Activated CD4-positive, alpha-beta memory T cell treated with anti-CD3 and anti-CD28 coated beads, Interleukin-2, amount 10 ng/mL, durations not matched to agents 7 days and 5 days (primary cell): ENCODE measurements at regions of chr19 and their contacts with region 1.

Region 1: GRCh38 chr19:21463449-21464105 is 41.8 kb upstream of the ZNF429 start:
- DNase-seq: peak; percentile 39
- H3K4me3 Mint-ChIP-seq: peak overlapping the region; percentile 71
- H3K27ac Mint-ChIP-seq: peak overlapping the region; percentile 26
- H3K4me1 Mint-ChIP-seq: peaks cover 4% of the 10 kb centered on the region
- H3K27me3 Mint-ChIP-seq: no peaks in the 10 kb centered on the region

Region 2: DNA sequence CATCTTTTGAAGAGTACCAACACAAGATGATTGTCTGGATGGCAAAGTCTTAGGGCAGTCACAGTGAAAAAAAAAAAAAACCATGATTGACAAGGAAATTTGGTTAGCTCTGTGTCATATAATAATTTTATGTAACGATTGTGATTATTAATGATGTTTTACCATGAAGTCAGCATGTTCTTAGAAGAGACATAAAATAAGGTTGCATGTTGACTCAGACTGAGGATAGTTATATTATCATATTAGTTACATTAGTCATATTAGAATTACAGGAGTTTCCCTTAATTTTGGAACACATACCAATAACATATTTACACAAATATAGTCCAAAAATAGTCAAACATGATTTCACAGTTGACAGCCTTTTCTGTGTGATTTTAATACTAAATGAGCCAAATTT is 316.0 kb before region 1 on chr19:
- CTCF ChIA-PET with region 1: no interaction called
- POLR2A ChIA-PET with region 1: no interaction called
- DNase-seq: no peak
- H3K4me3 Mint-ChIP-seq: no peak overlapping the region
- H3K27ac Mint-ChIP-seq: no peak overlapping the region
- H3K4me1 Mint-ChIP-seq: peaks cover 16% of the 10 kb centered on the region
- H3K27me3 Mint-ChIP-seq: no peaks in the 10 kb centered on the region

Region 3: DNA sequence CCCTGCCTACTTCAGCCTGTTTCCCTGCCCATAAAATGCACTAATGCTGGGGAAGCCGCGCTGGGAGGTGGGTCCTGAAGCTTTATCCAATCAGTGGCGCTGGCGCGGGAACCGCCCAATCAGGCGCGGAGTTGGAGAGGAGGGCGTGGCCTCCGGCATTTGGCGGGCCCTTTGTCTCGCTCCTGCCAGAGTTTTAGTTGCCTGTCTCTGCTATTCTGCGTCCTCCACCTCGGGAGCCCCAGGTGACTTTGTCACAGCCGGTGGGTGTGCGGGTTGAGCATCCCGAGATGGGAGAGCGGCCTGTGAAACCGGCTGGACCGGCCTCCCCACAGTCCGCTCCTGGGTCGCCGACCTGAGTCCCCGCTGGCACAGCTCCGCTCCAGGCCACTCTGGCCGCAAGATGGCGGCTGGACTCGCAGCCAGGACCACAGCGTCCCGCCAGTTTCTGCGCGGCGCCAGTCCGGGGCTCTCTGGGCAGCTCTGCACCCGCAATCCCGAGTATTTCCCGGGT is 11.1 kb after region 1 on chr19:
- CTCF ChIA-PET with region 1: no interaction called
- POLR2A ChIA-PET with region 1: interaction called, 14 read pairs
- DNase-seq: peak; percentile 72
- H3K4me3 Mint-ChIP-seq: peak overlapping the region; percentile 63
- H3K27ac Mint-ChIP-seq: no peak overlapping the region
- H3K4me1 Mint-ChIP-seq: peaks cover 1% of the 10 kb centered on the region
- H3K27me3 Mint-ChIP-seq: no peaks in the 10 kb centered on the region